Activated CD4-positive, alpha-beta memory T cell treated with anti-CD3 and anti-CD28 coated beads for 36 hours (primary cell): ENCODE measurements at regions of chr7 and their contacts with region 1.

Region 1: GRCh38 chr7:127392566-127393367 is at the start of gene ZNF800:
- DNase-seq: peak; percentile 93
- H3K4me3 Mint-ChIP-seq: peak within 1 kb of the TSS; percentile 92
- H3K27ac Mint-ChIP-seq: peak within 1 kb of the TSS; percentile 94
- H3K4me1 Mint-ChIP-seq: peaks cover 59% of the 10 kb centered on the region
- H3K27me3 Mint-ChIP-seq: no peaks in the 10 kb centered on the region
- total RNA-seq, gene ZNF800: 24.9 to 29.2 TPM

Region 2: GRCh38 chr7:125847692-125848091 is 1545.1 kb before region 1 on chr7:
- CTCF ChIA-PET with region 1: no interaction called
- POLR2A ChIA-PET with region 1: no interaction called
- intact Hi-C with region 1: no loop called
- DNase-seq: no peak
- H3K4me3 Mint-ChIP-seq: no peak overlapping the region
- H3K27ac Mint-ChIP-seq: no peak overlapping the region
- H3K4me1 Mint-ChIP-seq: no peaks in the 10 kb centered on the region
- H3K27me3 Mint-ChIP-seq: no peaks in the 10 kb centered on the region

Region 3: DNA sequence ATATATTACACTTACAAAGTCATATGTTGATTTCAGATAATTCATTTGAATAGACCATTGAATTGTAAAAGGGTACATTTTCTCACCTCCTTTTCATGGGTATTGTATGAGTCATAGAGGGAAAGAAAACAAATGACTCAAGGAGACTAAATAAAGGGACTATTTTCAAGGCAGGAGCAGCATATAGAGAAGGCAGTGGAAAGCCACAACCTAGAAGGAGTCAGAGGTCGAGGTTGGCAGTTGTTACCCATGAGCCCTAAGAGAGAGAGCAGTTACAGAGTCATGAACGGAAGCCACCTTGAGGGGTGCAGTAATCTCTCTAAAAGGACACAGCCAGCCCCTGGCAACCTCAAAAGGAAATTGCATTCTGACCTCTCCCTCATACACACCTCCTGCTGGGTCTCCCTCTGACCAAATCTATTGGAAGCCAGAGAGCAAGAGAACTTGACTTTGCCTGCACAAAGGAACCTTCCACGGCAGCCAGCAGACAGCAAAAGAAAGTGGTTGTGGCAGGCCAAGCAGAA is 278.0 kb before region 1 on chr7:
- CTCF ChIA-PET with region 1: no interaction called
- POLR2A ChIA-PET with region 1: no interaction called
- intact Hi-C with region 1: no loop called
- DNase-seq: no peak
- H3K4me3 Mint-ChIP-seq: no peak overlapping the region
- H3K27ac Mint-ChIP-seq: no peak overlapping the region
- H3K4me1 Mint-ChIP-seq: no peaks in the 10 kb centered on the region
- H3K27me3 Mint-ChIP-seq: peaks cover 6% of the 10 kb centered on the region

Region 4: DNA sequence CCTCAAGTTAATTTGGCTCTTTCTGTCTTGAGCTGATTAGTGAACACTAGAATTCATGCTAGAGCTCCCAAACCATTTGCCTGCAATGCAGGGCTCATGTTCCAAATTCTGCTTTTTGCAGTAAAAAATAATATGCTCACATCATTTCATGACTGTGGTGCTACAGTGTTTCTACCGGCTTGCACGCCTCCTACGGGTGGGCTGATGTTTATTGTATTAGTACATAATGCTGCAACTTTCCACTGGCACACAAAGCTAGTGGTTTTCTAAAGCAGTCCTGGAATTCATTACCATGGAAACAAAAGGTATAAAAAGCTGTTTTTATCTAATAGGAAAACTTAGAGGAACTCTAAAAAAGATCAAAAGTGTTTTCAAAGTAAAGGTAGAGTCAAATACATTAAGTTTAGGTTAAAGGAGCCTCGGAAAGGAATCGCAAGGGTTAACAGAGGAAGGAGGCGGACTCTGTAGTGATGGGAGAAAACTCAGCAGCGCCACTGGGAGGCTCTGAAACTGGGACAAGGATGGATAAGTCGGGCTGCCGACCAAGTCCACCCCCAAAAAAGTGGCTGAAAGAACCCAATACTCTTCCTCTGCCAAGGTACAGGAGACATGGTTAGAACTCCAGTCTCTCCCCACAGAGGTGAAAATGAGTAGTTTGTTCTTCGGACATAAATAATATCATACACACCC is 165.9 kb before region 1 on chr7:
- CTCF ChIA-PET with region 1: no interaction called
- POLR2A ChIA-PET with region 1: no interaction called
- intact Hi-C with region 1: no loop called
- DNase-seq: no peak
- H3K4me3 Mint-ChIP-seq: no peak overlapping the region
- H3K27ac Mint-ChIP-seq: no peak overlapping the region
- H3K4me1 Mint-ChIP-seq: no peaks in the 10 kb centered on the region
- H3K27me3 Mint-ChIP-seq: peaks cover 35% of the 10 kb centered on the region

Region 5: DNA sequence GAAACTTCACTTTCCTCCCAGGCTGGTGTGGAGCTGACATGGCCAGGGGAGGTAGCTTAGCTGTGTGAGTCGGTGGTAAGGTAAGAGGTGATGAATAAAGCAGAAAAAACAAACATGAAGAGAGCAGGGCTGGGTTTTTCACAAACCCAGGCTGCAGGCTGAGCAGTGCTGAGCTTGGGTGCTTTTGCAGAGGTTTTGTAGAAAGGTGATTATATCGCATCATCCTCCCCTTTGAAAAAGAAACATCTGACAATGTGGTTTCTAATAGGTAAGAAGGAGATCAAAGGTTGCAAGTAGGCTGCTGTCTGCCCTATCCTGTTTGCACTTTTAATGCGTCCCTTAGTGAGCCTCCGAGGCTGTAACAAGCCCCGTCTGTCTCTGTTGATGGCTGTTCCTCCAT is 70.4 kb before region 1 on chr7:
- CTCF ChIA-PET with region 1: no interaction called
- POLR2A ChIA-PET with region 1: interaction called, 3 read pairs
- intact Hi-C with region 1: loop called (anchors 1 kb)
- DNase-seq: peak; percentile 48
- H3K4me3 Mint-ChIP-seq: no peak overlapping the region
- H3K27ac Mint-ChIP-seq: peak overlapping the region; percentile 43
- H3K4me1 Mint-ChIP-seq: peaks cover 20% of the 10 kb centered on the region
- H3K27me3 Mint-ChIP-seq: no peaks in the 10 kb centered on the region

Region 6: GRCh38 chr7:127365164-127365956 is 27.4 kb before region 1 on chr7:
- CTCF ChIA-PET with region 1: interaction called, 3 read pairs
- POLR2A ChIA-PET with region 1: interaction called, 15 read pairs
- intact Hi-C with region 1: no loop called
- DNase-seq: no peak
- H3K4me3 Mint-ChIP-seq: no peak overlapping the region
- H3K27ac Mint-ChIP-seq: no peak overlapping the region
- H3K4me1 Mint-ChIP-seq: peaks cover 33% of the 10 kb centered on the region
- H3K27me3 Mint-ChIP-seq: no peaks in the 10 kb centered on the region

Region 7: DNA sequence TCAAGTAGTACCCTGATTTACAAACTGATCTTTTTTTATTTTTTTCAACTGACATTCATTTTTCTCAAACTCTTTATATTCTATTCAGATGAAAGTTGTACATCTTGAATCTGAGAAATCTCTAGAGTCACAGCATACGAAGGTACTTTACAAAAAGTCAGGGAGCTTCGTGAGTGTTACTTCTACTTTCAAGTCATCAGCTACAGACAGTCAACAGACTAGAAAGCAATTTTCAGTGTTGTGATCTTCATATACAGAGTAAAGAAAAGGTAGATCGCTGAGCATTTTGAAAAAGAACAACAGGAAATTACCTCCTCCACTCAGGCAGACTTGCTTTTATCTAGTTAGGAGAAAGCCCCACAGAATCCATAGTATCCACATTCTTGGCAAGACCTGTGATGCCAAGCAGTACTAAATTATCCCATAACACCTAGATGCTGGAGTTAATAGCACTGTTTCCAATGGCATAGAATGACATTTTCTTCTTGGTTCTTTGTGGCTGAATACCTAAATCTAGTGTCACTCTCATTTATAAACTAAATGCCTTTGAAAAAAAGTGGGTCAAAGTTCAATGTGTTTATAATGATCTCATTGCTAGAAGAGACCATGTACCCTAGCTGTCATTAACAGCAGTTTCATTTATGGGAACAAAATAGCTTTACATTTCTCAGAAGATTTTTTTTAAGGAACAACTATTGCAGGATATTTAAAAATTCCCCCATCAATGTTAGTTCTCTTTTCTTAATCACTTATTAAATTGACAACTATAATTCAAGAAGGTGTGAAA is 11.7 kb after region 1 on chr7:
- CTCF ChIA-PET with region 1: no interaction called
- POLR2A ChIA-PET with region 1: interaction called, 10 read pairs
- intact Hi-C with region 1: loop called (anchors 1 kb)
- DNase-seq: no peak
- H3K4me3 Mint-ChIP-seq: no peak overlapping the region
- H3K27ac Mint-ChIP-seq: peak overlapping the region; percentile 49
- H3K4me1 Mint-ChIP-seq: peaks cover 17% of the 10 kb centered on the region
- H3K27me3 Mint-ChIP-seq: no peaks in the 10 kb centered on the region

Region 8: GRCh38 chr7:127447326-127447945 is 54.7 kb after region 1 on chr7:
- CTCF ChIA-PET with region 1: interaction called, 12 read pairs
- POLR2A ChIA-PET with region 1: no interaction called
- intact Hi-C with region 1: no loop called
- DNase-seq: peak; percentile 52
- H3K4me3 Mint-ChIP-seq: no peak overlapping the region
- H3K27ac Mint-ChIP-seq: no peak overlapping the region
- H3K4me1 Mint-ChIP-seq: peaks cover 11% of the 10 kb centered on the region
- H3K27me3 Mint-ChIP-seq: peaks cover 7% of the 10 kb centered on the region

Region 9: GRCh38 chr7:127651556-127652332 is 259.0 kb after region 1 on chr7 and contains the start of gene SND1:
- CTCF ChIA-PET with region 1: no interaction called
- POLR2A ChIA-PET with region 1: no interaction called
- intact Hi-C with region 1: loop called (anchors 2 kb)
- DNase-seq: peak; percentile 100
- H3K4me3 Mint-ChIP-seq: peak within 1 kb of the TSS; percentile 98
- H3K27ac Mint-ChIP-seq: peak within 1 kb of the TSS; percentile 94
- H3K4me1 Mint-ChIP-seq: peaks cover 31% of the 10 kb centered on the region
- H3K27me3 Mint-ChIP-seq: no peaks in the 10 kb centered on the region
- total RNA-seq, gene SND1: 208 to 235 TPM